ENCODE measurements at regions of chr6 and their contacts with region 1.

Region 1: DNA sequence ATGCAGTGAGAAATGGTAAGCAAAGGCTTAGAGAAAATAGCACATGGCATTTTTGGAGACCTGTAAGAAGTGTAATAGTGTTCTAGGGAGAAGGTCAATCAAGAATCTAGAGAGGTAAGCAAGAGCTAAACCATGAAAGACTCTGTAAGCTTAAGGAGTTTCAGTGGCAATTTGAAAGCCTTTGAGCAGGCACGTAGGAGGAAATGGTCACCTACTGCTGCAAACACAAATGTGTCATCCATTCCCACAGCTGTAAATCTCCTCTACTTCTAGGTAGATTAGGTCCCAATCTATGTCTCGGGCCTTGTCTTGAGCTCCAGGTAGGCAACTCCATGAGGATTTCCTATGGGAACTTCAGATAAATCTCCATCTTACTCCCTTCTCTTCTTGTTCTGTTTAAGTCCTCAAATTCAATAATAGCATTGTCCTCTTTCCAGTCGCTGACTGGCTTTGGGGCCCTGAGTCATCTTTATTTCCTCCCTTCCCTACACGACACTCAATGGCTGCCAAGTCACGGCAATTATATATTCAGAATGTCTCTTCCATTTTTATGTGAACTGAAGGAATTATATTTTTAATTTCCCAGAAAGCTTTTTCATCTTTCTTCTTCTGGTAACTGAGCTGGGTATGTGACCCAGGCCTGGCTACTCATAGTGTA is 24.2 kb upstream of the PAQR8 start:
- DNase-seq: no peak
- H3K4me3 ChIP-seq: no peak overlapping the region
- H3K27ac ChIP-seq: no peak overlapping the region
- H3K4me1 ChIP-seq: peaks cover 36% of the 10 kb centered on the region
- H3K27me3 ChIP-seq: no peaks in the 10 kb centered on the region
- CTCF ChIP-seq: no peak

Region 2: GRCh38 chr6:52369234-52369633 is 31.5 kb after region 1 on chr6:
- CTCF ChIA-PET with region 1: no interaction called
- POLR2A ChIA-PET with region 1: interaction called, 14 read pairs
- intact Hi-C with region 1: no loop called
- DNase-seq: no peak
- H3K4me3 ChIP-seq: no peak overlapping the region
- H3K27ac ChIP-seq: no peak overlapping the region
- H3K4me1 ChIP-seq: no peaks in the 10 kb centered on the region
- H3K27me3 ChIP-seq: no peaks in the 10 kb centered on the region
- CTCF ChIP-seq: no peak

Region 3: DNA sequence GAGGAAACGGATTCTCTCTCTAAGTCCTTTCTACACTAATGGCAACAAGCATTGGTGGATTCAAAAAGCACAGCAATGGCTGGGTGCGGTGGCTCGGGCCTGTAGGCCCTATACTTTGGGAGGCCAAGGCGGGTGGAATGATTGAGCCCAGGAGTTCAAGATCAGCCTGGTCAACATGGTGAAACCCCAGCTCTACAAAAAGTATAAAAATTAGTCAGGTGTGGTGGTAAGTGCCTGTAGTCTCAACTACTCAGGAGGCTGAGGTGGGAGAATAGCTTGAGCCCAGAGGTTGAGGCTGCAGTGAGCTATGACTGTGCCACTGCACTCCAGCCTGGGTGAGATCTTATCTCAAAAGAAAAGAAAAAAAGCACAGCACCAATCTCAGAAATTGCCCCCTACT is 43.5 kb after region 1 on chr6:
- CTCF ChIA-PET with region 1: no interaction called
- POLR2A ChIA-PET with region 1: interaction called, 10 read pairs
- intact Hi-C with region 1: no loop called
- DNase-seq: no peak
- H3K4me3 ChIP-seq: no peak overlapping the region
- H3K27ac ChIP-seq: no peak overlapping the region
- H3K4me1 ChIP-seq: peaks cover 6% of the 10 kb centered on the region
- H3K27me3 ChIP-seq: no peaks in the 10 kb centered on the region
- CTCF ChIP-seq: no peak

Measured in PC-9 (cell line).